ENCODE measurements at regions of chr11 and their contacts with region 1.

Region 1: DNA sequence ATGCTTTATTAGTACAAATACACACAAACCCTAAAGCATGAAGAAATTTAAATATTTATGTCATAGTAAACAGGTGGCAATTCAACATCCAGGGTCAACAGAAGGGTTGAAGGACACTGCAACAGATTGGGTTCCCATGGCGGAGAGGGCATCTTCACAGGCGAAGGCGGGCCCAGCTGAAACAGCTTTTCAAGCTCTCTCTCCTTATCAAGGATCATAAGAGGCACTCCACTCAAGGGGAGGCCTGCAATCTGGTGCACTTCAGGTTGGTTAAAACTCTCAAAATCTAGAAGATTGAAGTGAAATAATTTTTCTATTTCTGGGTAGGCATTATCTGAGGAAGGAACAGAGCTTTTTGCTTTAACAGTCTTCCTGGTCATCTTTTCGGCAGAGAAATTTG is 16.8 kb upstream of the SLC22A8 start:
- DNase-seq: no peak
- H3K4me3 Mint-ChIP-seq: no peak overlapping the region
- H3K27ac Mint-ChIP-seq: no peak overlapping the region
- H3K4me1 Mint-ChIP-seq: no peaks in the 10 kb centered on the region
- H3K27me3 Mint-ChIP-seq: peaks cover 20% of the 10 kb centered on the region

Region 2: GRCh38 chr11:61281581-61282250 is 1750.7 kb before region 1 on chr11:
- intact Hi-C with region 1: no loop called
- DNase-seq: no peak
- H3K4me3 Mint-ChIP-seq: no peak overlapping the region
- H3K27ac Mint-ChIP-seq: no peak overlapping the region
- H3K4me1 Mint-ChIP-seq: peaks cover 4% of the 10 kb centered on the region
- H3K27me3 Mint-ChIP-seq: peaks cover 1% of the 10 kb centered on the region

Region 3: GRCh38 chr11:62777389-62777788 is 255.1 kb before region 1 on chr11:
- intact Hi-C with region 1: no loop called
- DNase-seq: no peak
- H3K4me3 Mint-ChIP-seq: peak overlapping the region; percentile 27
- H3K27ac Mint-ChIP-seq: peak overlapping the region; percentile 95
- H3K4me1 Mint-ChIP-seq: peaks cover 13% of the 10 kb centered on the region
- H3K27me3 Mint-ChIP-seq: no peaks in the 10 kb centered on the region

Region 4: DNA sequence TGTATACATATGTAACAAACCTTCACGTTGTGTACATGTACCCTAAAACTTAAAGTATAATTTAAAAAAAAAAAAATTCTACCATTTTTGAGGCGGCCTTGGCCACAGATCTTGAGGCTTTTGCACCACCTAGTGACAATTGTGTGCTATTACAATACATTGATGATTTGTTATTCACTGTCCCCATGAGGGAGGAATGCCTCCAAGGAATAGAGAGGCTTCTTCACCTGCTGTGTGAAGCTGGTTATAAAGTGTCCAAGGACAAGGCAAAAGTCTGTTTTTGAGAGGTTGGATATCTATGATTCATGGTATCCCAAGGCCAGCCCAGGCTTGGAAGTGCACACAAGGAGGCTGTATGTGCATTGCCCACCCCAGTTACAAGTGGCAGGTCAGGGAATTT is 180.3 kb after region 1 on chr11:
- intact Hi-C with region 1: loop called (anchors 1 kb)
- DNase-seq: peak; percentile 2
- H3K4me3 Mint-ChIP-seq: no peak overlapping the region
- H3K27ac Mint-ChIP-seq: no peak overlapping the region
- H3K4me1 Mint-ChIP-seq: no peaks in the 10 kb centered on the region
- H3K27me3 Mint-ChIP-seq: peaks cover under 1% of the 10 kb centered on the region

Region 5: GRCh38 chr11:63478896-63479295 is 446.4 kb after region 1 on chr11:
- intact Hi-C with region 1: loop called (anchors 2 kb)
- DNase-seq: peak; percentile 31
- H3K4me3 Mint-ChIP-seq: no peak overlapping the region
- H3K27ac Mint-ChIP-seq: no peak overlapping the region
- H3K4me1 Mint-ChIP-seq: no peaks in the 10 kb centered on the region
- H3K27me3 Mint-ChIP-seq: peaks cover 36% of the 10 kb centered on the region

Measured in activated T-helper 1 cell treated with anti-CD3 and anti-CD28 coated beads, Interleukin-12 subunit alpha, Interleukin-12 subunit beta, Interleukin-2, Interleukin-4 antibody, amounts not matched to agents 30 ng/mL and 10 ng/mL and 1 ng/mL, durations not matched to agents 14 hours and 24 hours and 36 hours (primary cell).